ENCODE measurements at regions of chr19 and their contacts with region 1.

Region 1: DNA sequence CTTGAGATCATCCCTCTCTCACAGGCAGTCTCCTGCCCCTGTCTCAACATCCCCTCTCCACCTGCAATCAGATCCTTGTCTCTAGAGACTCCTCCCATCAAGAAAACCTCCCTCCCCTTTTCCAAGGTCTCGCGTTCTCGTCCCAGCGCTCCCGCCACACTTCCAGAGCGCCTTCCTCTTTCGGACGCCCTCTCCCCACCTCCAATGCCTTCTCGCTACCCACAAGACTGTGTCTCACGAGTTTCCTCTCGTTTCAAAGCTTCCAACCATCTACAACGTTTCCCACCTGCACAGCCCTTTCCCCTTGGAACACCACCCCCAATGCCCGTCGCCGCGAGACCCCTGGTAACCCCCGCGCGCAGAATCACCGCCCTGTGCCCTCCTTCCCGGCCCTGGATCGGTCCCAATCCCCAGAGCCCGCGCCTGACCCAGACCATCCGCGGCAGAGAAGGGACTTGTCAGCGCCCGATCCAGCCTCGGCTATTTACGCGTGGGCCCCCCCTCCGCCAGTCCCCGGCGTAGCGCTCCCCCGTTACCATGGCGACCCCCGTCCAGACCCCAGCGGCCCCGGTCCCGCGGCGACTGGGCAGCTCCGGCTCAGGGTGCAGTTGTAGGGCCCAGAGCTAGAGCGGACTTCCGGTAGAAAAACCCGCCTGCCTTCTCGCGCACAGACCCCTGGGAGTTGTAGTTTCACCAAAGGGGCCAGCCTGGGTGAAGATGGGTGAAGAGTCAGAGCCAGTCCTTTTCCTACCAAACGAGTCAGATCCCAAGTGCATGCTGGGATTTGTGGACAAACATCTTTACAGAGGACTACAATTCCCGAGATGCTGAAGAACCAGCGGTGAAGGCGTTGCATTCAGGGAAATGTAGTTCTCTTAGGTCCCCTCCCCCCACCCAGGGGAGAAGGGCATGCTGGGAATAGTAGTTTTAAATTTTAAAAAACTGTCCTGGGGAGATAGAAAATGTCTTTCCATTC is at the start of gene AP2S1:
- DNase-seq: peak; percentile 98
- H3K4me3 ChIP-seq: peak within 1 kb of the TSS; percentile 90
- H3K27ac ChIP-seq: peak within 1 kb of the TSS; percentile 5
- H3K4me1 ChIP-seq: peaks cover 16% of the 10 kb centered on the region
- CTCF ChIP-seq: no peak
- total RNA-seq, gene AP2S1: 105 and 110 TPM in 2 replicates

Region 2: GRCh38 chr19:46946611-46947238 is 96.2 kb after region 1 on chr19:
- CTCF ChIA-PET with region 1: no interaction called
- POLR2A ChIA-PET with region 1: interaction called, 10 read pairs
- intact Hi-C with region 1: no loop called
- DNase-seq: no peak
- H3K4me3 ChIP-seq: no peak overlapping the region
- H3K27ac ChIP-seq: no peak overlapping the region
- H3K4me1 ChIP-seq: no peaks in the 10 kb centered on the region
- CTCF ChIP-seq: no peak

Region 3: DNA sequence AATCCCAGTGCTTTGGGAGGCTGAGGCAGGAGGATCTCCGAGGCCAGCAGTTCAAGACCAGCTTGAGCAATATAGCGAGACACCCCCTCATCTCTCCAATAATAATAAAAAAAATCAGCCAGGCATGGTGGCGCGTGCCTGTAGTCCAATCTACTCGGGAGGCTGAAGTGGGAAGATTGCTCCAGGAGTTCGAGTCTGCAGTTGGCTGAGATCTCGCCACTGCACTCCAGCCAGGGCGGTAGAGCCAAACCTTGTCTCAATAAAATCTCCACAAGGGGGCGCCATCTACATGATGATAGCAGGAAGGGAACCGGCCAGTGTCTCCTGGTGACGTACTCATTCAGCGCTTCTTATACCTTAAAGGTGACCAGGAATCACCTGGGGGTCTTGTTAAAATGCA is 445.5 kb after region 1 on chr19:
- CTCF ChIA-PET with region 1: no interaction called
- POLR2A ChIA-PET with region 1: no interaction called
- intact Hi-C with region 1: no loop called
- DNase-seq: peak; percentile 93
- H3K4me3 ChIP-seq: no peak overlapping the region
- H3K27ac ChIP-seq: no peak overlapping the region
- H3K4me1 ChIP-seq: peaks cover 8% of the 10 kb centered on the region
- CTCF ChIP-seq: peak; percentile 87